Aorta (tissue), 5 donors: ENCODE measurements at regions of chr2 and their contacts with region 1.

Region 1: DNA sequence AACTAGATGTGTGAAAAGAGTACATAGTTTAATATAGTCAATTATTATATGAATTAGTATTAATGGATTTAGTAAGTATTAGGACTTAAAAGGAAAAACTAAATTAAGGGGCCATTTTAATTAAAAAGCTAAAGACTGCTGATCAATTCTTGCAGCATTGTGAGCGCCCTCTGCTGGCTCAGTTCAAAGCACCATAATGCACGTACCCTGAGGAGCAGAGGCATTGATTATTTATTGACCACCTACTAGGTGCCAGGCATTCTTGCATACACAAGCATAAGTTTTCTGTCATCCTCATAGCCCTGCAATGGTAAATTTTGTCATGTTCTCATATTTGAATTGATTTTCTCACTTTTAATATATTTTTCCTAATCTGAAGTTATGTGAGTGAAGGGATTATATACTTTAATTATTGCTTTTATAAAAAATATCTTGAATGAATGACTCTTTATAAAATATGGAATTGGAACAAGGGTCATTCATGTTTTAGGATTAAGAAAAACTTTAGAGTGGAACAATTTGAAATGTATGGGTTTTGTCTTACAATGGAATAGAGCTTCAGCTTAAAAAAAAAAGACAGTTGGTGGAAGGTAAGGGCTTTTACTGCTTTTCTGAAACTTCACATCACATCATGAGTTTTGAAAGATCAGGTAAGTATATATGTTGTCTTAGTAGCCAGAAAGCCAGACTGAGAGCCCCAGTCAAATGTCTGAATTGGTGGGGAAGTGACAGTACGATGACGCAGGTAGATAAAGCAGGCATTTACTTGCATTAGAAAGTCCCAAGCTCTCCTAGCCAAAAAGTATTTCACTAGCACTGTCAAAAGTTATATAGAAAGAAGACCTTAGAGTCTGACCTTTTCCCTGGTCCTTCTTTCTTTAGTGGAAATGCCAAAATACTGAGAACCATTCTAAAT is 9.7 kb downstream of the ITGA4 start:
- DNase-seq: peak; percentile 79 to 89
- ATAC-seq: peak; percentile 64
- H3K4me3 ChIP-seq: no peak overlapping the region
- H3K27ac ChIP-seq: no peak overlapping the region
- H3K4me1 ChIP-seq: no peaks in the 10 kb centered on the region
- H3K27me3 ChIP-seq: no peaks in the 10 kb centered on the region

Region 2: DNA sequence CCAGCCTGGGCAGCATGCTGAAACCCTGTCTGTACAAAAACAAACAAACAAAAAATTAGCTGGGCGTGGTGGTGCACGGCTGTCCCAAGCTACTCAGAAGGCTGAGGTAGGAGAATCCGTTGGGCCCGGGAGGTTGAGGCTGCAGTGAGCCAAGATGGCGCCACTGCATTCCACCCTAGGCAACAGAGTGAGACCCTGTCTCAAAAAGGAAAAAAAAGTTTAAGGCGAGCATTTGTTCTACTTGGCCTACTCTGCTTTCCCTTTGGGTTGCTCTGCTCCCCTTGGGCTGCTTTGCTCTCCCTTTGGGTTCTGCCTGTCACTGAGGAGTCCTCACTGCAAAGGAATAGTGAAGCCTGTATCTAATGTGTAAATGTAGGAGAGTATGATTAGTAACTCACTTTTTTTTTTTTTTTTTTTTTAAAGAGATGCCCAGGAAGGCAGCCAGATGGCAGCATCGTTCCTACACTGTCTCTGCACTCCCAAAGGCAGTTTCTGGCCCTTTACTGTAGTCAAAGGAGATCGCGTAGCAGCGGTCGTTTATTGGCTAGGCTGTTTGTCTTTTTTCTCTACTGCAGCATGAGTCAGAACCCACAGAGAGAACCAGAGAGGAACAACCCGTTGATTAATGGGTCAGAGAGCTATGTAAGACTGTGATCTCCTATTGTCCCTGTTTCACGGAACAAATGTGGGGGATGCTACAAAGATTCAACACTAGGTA is 1341.5 kb before region 1 on chr2:
- intact Hi-C with region 1: loop called in 1 of 2 experiments (anchors 10 kb)
- DNase-seq: peak; percentile 57 to 73
- ATAC-seq: peak; percentile 63
- H3K4me3 ChIP-seq: no peak overlapping the region
- H3K27ac ChIP-seq: no peak overlapping the region
- H3K4me1 ChIP-seq: no peaks in the 10 kb centered on the region
- H3K27me3 ChIP-seq: no peaks in the 10 kb centered on the region

Region 3: DNA sequence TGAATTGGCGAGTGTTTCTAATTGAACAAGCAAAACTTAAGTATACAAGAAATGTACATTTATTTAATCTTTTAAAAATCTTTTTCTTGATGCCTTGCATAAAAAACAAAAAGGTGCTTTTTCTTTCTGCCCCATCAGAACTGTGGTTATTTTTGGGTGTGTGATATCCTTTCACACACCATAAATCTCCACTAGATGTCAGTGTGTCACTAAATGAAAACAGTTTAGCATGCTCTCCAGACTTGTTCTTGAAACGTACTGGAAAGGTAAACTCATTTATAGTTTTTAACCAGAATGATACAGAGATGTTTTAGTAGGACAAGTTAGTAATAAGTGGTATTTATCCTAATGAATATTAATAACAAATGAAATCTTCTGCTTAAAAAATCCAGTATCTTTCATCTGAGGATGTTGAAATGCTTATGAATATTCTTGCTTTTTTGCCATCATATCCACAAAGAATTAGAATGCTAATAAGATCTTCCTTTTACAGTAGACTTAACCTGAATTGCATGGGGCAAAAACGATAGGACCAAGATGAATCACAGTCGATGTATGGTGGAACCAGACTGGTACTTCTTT is 389.7 kb before region 1 on chr2:
- intact Hi-C with region 1: loop called in 1 of 2 experiments (anchors 10 kb)
- DNase-seq: no peak
- ATAC-seq: no peak
- H3K4me3 ChIP-seq: no peak overlapping the region
- H3K27ac ChIP-seq: no peak overlapping the region
- H3K4me1 ChIP-seq: peaks cover 0 to 3% of the 10 kb centered on the region in 2 donors
- H3K27me3 ChIP-seq: no peaks in the 10 kb centered on the region